BJ (cell line): ENCODE measurements at regions of chr11 and their contacts with region 1.

Region 1: DNA sequence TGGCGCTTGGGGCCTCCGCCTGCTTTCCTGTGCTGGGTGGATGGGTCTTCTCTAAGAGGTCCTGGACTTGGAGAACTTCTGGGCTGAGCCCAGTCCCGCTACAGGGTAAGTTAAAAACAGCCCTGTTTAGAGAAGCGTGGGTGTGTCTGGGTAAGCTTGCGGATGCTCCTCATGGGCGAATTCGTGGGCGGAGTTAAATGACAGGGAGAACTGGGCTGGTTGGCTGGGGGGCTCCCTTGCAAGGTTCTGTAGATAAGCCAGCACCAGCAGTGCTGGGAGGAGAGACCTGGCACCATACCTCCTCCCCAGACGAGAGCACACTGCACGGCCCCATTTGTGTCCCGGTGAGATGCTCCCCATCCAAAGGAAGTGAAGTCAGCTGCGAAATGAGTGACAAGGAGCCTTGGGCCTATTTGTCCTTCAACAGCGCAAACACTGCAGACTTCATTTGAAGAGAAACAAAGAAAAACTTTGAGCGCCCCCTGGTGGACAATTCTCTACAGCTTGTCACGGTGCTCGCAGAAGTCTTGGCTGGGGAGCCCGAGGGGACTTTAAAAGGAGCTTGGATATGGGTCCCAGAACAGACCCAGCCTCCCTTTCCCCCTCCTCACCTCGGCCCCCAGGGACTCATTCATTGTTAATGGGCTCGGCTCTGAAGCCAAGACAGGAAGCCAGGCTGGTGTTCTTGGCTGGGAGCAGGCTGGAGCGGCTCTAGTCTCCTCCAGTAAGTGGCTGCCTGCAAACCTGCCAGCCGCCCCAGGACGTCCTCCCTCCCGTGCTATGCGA is 39.5 kb downstream of the TP53I11 start:
- DNase-seq: no peak
- H3K4me3 ChIP-seq: no peak overlapping the region
- H3K27me3 ChIP-seq: 0 out of 2 replicates have a peak, but pooled peaks cover 2% of the 10 kb centered on the region
- CTCF ChIP-seq: peak; percentile 79

Region 2: DNA sequence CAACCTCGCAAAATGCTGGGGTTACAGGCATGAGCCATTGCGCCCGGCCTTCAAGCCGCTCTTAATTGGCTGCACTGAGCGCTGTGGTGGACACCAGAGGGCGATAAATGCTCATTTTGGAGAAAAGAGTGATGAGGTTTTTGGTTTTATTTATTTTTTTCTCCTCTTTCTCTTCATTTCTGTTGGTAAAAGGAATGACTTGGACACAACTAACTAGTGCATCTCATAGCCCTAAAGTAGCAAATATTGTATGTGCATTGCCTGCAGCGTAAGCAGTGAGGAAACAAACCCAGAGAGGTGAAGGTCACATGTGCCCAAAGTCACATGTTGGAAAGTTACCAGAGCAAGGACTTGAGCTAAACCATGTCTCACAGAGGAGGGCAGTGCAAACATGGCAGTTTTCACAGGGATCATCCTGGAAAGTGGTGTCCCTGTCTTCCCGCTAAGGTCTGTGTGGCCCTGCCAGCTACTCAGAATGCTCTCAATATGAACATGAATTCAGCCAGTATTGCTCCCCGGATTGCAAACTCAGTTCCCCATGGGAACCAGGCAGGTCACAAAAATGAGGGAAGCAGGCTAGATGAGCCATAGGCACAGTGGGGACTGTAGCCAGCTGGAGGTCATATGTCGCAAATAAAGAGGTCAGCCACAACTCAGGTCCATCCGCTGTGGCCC is 354.4 kb before region 1 on chr11:
- CTCF ChIA-PET with region 1: interaction called, 30 read pairs
- POLR2A ChIA-PET with region 1: no interaction called
- DNase-seq: no peak
- H3K4me3 ChIP-seq: no peak overlapping the region
- H3K27me3 ChIP-seq: no peaks in the 10 kb centered on the region; the same call in 1 of the 2 replicates
- CTCF ChIP-seq: peak; percentile 79

Region 3: GRCh38 chr11:44611687-44612434 is 299.4 kb before region 1 on chr11:
- CTCF ChIA-PET with region 1: interaction called, 32 read pairs
- POLR2A ChIA-PET with region 1: no interaction called
- DNase-seq: no peak
- H3K4me3 ChIP-seq: no peak overlapping the region
- H3K27me3 ChIP-seq: no peaks in the 10 kb centered on the region
- CTCF ChIP-seq: no peak

Region 4: GRCh38 chr11:44726283-44727113 is 184.7 kb before region 1 on chr11 and contains the start of gene TSPAN18:
- CTCF ChIA-PET with region 1: interaction called, 13 read pairs
- POLR2A ChIA-PET with region 1: no interaction called
- DNase-seq: no peak
- H3K4me3 ChIP-seq: peak within 1 kb of the TSS; percentile 35
- H3K27me3 ChIP-seq: peaks cover 26% of the 10 kb centered on the region
- CTCF ChIP-seq: no peak
- polyA plus RNA-seq, gene TSPAN18: 0.20 and 0.55 TPM in 2 replicates

Region 5: GRCh38 chr11:44899959-44900358 is 11.3 kb before region 1 on chr11:
- CTCF ChIA-PET with region 1: interaction called, 32 read pairs
- POLR2A ChIA-PET with region 1: no interaction called
- DNase-seq: no peak
- H3K4me3 ChIP-seq: no peak overlapping the region
- H3K27me3 ChIP-seq: peaks cover 11% of the 10 kb centered on the region
- CTCF ChIP-seq: no peak

Region 6: GRCh38 chr11:44927174-44927661 is 16.0 kb after region 1 on chr11:
- CTCF ChIA-PET with region 1: interaction called, 25 read pairs
- POLR2A ChIA-PET with region 1: no interaction called
- DNase-seq: no peak
- H3K4me3 ChIP-seq: no peak overlapping the region
- H3K27me3 ChIP-seq: no peaks in the 10 kb centered on the region; the same call in 1 of the 2 replicates
- CTCF ChIP-seq: peak; percentile 92

Region 7: GRCh38 chr11:45025716-45026492 is 114.7 kb after region 1 on chr11:
- CTCF ChIA-PET with region 1: no interaction called
- POLR2A ChIA-PET with region 1: no interaction called
- DNase-seq: no peak
- H3K4me3 ChIP-seq: no peak overlapping the region
- H3K27me3 ChIP-seq: peaks cover 4% of the 10 kb centered on the region
- CTCF ChIP-seq: no peak